ENCODE measurements at regions of chr14 and their contacts with region 1.

Region 1: GRCh38 chr14:22190411-22191191 is 398.4 kb downstream of the DAD1 start:
- DNase-seq: no peak
- ATAC-seq: no peak
- H3K4me3 ChIP-seq: no peak overlapping the region
- H3K27ac ChIP-seq: no peak overlapping the region
- H3K4me1 ChIP-seq: peaks cover 9% of the 10 kb centered on the region; the same call in 1 of the 2 replicates
- H3K27me3 ChIP-seq: no peaks in the 10 kb centered on the region
- CTCF ChIP-seq: no peak
- EP300 ChIP-seq: no peak
- POLR2A ChIP-seq: no peak
- RAD21 ChIP-seq: no peak

Region 2: GRCh38 chr14:22213120-22213519 is 22.5 kb after region 1 on chr14:
- CTCF ChIA-PET with region 1: no interaction called
- POLR2A ChIA-PET with region 1: no interaction called
- in situ Hi-C with region 1: no loop called
- intact Hi-C with region 1: no loop called
- DNase-seq: no peak
- ATAC-seq: no peak
- H3K4me3 ChIP-seq: no peak overlapping the region
- H3K27ac ChIP-seq: no peak overlapping the region
- H3K4me1 ChIP-seq: no peaks in the 10 kb centered on the region
- H3K27me3 ChIP-seq: no peaks in the 10 kb centered on the region
- CTCF ChIP-seq: no peak
- EP300 ChIP-seq: no peak
- POLR2A ChIP-seq: no peak
- RAD21 ChIP-seq: no peak

Region 3: GRCh38 chr14:22231018-22231417 is 40.4 kb after region 1 on chr14:
- CTCF ChIA-PET with region 1: no interaction called
- POLR2A ChIA-PET with region 1: no interaction called
- in situ Hi-C with region 1: no loop called
- intact Hi-C with region 1: loop called (anchors 1 kb)
- DNase-seq: no peak
- ATAC-seq: no peak
- H3K4me3 ChIP-seq: no peak overlapping the region
- H3K27ac ChIP-seq: no peak overlapping the region
- H3K4me1 ChIP-seq: no peaks in the 10 kb centered on the region
- H3K27me3 ChIP-seq: no peaks in the 10 kb centered on the region
- CTCF ChIP-seq: no peak
- EP300 ChIP-seq: no peak
- POLR2A ChIP-seq: no peak
- RAD21 ChIP-seq: no peak

Measured in HepG2 (cell line).